Mammary epithelial cell (primary cell): ENCODE measurements at regions of chr20 and their contacts with region 1.

Region 1: GRCh38 chr20:56392282-56393137 is at the start of gene CSTF1:
- DNase-seq: peak; percentile 100
- H3K4me3 ChIP-seq: peak within 1 kb of the TSS; percentile 75 to 98 (median 92)
- H3K27ac ChIP-seq: peak within 1 kb of the TSS; percentile 75
- H3K4me1 ChIP-seq: peaks cover 16% of the 10 kb centered on the region
- H3K27me3 ChIP-seq: no peaks in the 10 kb centered on the region
- CTCF ChIP-seq: no peak
- total RNA-seq, gene CSTF1: 33.4 to 35.0 TPM

Region 2: DNA sequence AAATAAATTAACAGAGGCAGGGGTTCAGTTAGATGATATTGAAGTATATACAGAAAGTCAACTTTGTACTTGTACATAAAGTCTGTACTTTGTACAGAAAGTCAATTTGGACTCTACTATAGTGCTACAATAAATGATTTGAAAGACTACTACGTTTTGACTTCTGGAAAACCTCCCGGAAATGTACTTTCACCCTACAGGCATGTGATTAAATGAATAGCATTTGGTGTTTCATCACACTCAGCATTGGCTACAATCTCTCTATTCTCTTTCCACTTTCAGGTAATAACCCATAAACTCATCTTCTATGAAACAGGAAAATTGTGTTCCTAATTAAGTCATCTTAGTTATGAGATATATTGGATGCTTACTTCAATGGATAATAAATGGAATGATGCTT is 169.6 kb before region 1 on chr20:
- CTCF ChIA-PET with region 1: no interaction called
- dilution Hi-C with region 1: no loop called
- in situ Hi-C with region 1: no loop called
- intact Hi-C with region 1: no loop called
- DNase-seq: peak; percentile 52
- H3K4me3 ChIP-seq: peak overlapping the region in 2 of 3 experiments; percentile 5
- H3K27ac ChIP-seq: peak overlapping the region; percentile 93
- H3K4me1 ChIP-seq: peaks cover 44% of the 10 kb centered on the region
- H3K27me3 ChIP-seq: no peaks in the 10 kb centered on the region
- CTCF ChIP-seq: no peak

Region 3: GRCh38 chr20:56358596-56359211 is 33.8 kb before region 1 on chr20 and contains the start of gene FAM210B:
- CTCF ChIA-PET with region 1: no interaction called
- dilution Hi-C with region 1: no loop called
- in situ Hi-C with region 1: no loop called
- intact Hi-C with region 1: loop called (anchors 1 kb)
- DNase-seq: peak; percentile 81
- H3K4me3 ChIP-seq: peak within 1 kb of the TSS; percentile 74 to 80 (median 76)
- H3K27ac ChIP-seq: peak within 1 kb of the TSS; percentile 61
- H3K4me1 ChIP-seq: peaks cover 32% of the 10 kb centered on the region
- H3K27me3 ChIP-seq: no peaks in the 10 kb centered on the region
- CTCF ChIP-seq: no peak
- total RNA-seq, gene FAM210B: 51.6 to 125 TPM

Region 4: GRCh38 chr20:56373940-56374339 is 18.6 kb before region 1 on chr20:
- CTCF ChIA-PET with region 1: no interaction called
- dilution Hi-C with region 1: no loop called
- in situ Hi-C with region 1: no loop called
- intact Hi-C with region 1: loop called (anchors 2 kb)
- DNase-seq: peak; percentile 94
- H3K4me3 ChIP-seq: no peak overlapping the region
- H3K27ac ChIP-seq: peak overlapping the region; percentile 29
- H3K4me1 ChIP-seq: peaks cover 8% of the 10 kb centered on the region
- H3K27me3 ChIP-seq: no peaks in the 10 kb centered on the region
- CTCF ChIP-seq: no peak

Region 5: DNA sequence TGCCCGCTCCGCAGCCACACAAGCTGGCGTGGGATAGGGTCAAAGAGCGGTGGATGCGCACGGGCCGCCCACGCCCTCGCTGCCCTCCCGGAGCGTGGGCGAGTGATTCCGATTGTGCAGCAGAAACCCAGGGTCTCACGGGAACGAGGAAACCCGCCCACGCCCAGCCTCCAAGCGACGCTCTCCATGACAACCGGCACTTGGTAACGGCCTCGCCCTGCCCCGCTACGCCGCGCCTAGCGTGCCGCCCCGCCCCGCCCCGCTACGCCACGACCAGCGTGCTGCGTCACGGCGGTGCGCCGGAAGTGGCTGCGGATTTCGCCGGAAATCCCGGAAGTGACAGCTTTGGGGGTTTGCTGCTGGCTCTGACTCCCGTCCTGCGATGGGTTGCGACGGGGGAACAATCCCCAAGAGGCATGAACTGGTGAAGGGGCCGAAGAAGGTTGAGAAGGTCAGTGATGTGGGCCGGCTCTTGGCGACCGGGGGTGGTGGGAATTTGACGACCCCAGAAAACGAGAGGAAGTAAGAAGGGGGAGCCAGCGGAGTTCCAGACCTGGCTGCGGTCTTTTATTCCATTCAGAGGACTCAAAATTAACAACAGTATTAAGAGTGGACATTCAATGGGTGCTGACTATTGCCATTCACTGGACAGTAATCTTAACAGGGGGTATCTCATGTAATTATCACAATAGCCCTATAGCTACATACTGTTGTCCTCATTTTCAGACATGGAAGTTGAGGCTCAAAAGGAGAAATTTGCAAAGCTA is 76.0 kb after region 1 on chr20 and contains the start of gene RTF2:
- CTCF ChIA-PET with region 1: no interaction called
- dilution Hi-C with region 1: no loop called
- in situ Hi-C with region 1: no loop called
- intact Hi-C with region 1: loop called (anchors 1 kb)
- DNase-seq: peak; percentile 91
- H3K4me3 ChIP-seq: peak within 1 kb of the TSS; percentile 78 to 99 (median 97)
- H3K27ac ChIP-seq: peak within 1 kb of the TSS; percentile 95
- H3K4me1 ChIP-seq: peaks cover 14% of the 10 kb centered on the region
- H3K27me3 ChIP-seq: no peaks in the 10 kb centered on the region
- CTCF ChIP-seq: no peak
- total RNA-seq, gene RTF2: 46.2 to 66.2 TPM